Right lobe of liver (tissue), 6 donors: ENCODE measurements at regions of chr9 and their contacts with region 1.

Region 1: DNA sequence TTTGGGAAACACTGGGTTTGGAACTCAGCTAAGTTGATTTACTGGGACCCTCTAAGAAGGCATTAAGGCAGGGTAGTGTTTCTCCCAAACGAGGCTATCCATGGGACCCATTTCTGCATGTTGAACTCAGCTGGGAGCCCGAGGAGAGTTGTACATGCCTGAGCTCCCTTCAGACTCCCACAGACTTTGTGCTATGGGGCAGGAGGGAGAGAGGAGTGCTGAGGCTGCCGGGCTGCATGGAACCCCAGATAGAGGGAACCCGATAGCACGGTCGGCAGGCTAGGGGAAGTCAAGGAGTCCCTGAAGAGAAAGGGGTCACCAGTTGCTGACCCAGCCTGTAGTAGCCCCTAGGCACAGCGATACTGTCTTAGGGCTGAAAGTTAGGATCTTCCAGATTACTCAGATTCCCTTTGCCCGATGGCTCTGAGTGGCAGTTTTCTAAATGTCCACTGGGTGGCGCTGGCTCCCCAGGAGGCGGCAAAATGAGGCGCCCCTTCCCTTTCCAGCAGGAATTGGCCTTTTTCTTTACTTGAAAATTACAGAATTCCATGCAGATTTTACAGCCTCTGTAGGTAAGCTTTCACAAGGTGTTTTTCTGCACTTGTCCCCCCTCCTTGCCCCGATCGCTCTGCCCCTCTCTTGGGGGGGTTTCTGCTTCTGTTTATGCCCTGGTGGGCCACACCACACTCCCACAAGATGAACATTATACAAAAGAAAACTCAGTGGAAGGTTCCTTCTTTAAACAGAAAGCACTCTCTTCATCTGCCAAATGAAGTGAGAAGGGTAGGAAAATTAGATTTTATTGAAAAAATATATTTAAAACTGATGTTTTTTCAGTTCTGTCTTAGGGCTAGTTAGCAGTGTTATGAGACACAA is 17.8 kb downstream of the NANS start:
- DNase-seq: peak in 2 of 3 donors; percentile 58 to 76
- ATAC-seq: peak; percentile 68 to 80 (median 70)
- H3K4me3 ChIP-seq: no peak overlapping the region
- H3K27ac ChIP-seq: peak overlapping the region in 2 of 3 donors; percentile 46 to 53
- H3K4me1 ChIP-seq: peaks cover 0 to 29% (median 10%) of the 10 kb centered on the region in 4 donors
- H3K27me3 ChIP-seq: no peaks in the 10 kb centered on the region
- CTCF ChIP-seq: peak; percentile 89 to 98 (median 98)
- POLR2A ChIP-seq: no peak

Region 2: GRCh38 chr9:97923529-97924108 is 150.7 kb before region 1 on chr9:
- intact Hi-C with region 1: no loop called
- DNase-seq: peak; percentile 55 to 82 (median 65)
- ATAC-seq: peak; percentile 60 to 68 (median 65)
- H3K4me3 ChIP-seq: peak overlapping the region in 2 of 3 donors; percentile 7 to 61
- H3K27ac ChIP-seq: peak overlapping the region in 1 of 3 donors; percentile 98
- H3K4me1 ChIP-seq: peaks cover 0 to 28% (median 3%) of the 10 kb centered on the region in 4 donors
- H3K27me3 ChIP-seq: peaks cover 0 to 7% of the 10 kb centered on the region in 2 donors
- CTCF ChIP-seq: peak; percentile 74 to 83 (median 79)
- POLR2A ChIP-seq: no peak

Region 3: GRCh38 chr9:98222885-98223640 is 148.7 kb after region 1 on chr9:
- intact Hi-C with region 1: loop called in 1 of 2 experiments (anchors 10 kb)
- DNase-seq: no peak
- ATAC-seq: no peak
- H3K4me3 ChIP-seq: no peak overlapping the region
- H3K27ac ChIP-seq: peak overlapping the region in 1 of 3 donors; percentile 18
- H3K4me1 ChIP-seq: peaks cover 0 to 52% (median 30%) of the 10 kb centered on the region in 4 donors
- H3K27me3 ChIP-seq: no peaks in the 10 kb centered on the region
- CTCF ChIP-seq: no peak
- POLR2A ChIP-seq: no peak